Activated CD8-positive, alpha-beta T cell treated with anti-CD3 and anti-CD28 coated beads, Interleukin-2, amount 10 ng/mL, durations not matched to agents 7 days and 5 days (primary cell): ENCODE measurements at regions of chr3 and their contacts with region 1.

Region 1: GRCh38 chr3:48472915-48473616 is 26.5 kb downstream of the ATRIP start:
- DNase-seq: peak; percentile 98
- ATAC-seq: peak; percentile 88
- H3K4me3 Mint-ChIP-seq: peak overlapping the region; percentile 93
- H3K27ac Mint-ChIP-seq: peak overlapping the region; percentile 100
- H3K4me1 Mint-ChIP-seq: peaks cover 73% of the 10 kb centered on the region
- H3K27me3 Mint-ChIP-seq: no peaks in the 10 kb centered on the region

Region 2: DNA sequence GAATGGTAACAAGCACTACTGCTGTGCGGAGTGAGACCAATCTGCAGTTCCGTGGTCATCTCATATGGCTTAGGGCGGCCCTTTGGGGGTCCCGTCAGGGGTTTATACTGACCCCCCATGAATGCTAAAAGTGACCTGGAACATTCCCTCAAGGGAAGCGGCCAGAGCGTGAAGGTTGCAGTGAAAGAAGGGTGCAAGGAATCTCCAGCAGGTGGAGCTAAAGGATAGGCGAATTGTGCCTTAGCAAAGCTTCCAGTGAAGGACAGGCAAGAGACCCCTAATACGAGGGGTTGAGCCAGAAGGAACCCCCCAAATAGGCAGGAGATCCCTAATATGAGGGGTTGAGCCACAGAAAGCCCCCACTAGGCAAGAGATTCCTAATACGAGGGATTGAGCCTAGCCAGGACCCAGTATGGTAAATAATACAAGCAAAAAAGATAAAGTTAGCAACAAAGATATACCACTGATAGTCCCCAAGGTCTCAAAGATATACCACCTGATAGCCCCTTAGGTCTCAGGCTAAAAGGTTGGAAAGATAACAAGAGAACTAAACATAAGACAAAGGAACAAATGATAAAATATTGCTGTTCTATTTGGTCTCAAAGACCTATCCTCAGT is 199.4 kb before region 1 on chr3:
- CTCF ChIA-PET with region 1: no interaction called
- POLR2A ChIA-PET with region 1: no interaction called
- DNase-seq: peak; percentile 72
- ATAC-seq: peak; percentile 44
- H3K4me3 Mint-ChIP-seq: no peak overlapping the region
- H3K27ac Mint-ChIP-seq: no peak overlapping the region
- H3K4me1 Mint-ChIP-seq: peaks cover 20% of the 10 kb centered on the region
- H3K27me3 Mint-ChIP-seq: no peaks in the 10 kb centered on the region

Region 3: GRCh38 chr3:48446425-48447193 is 26.5 kb before region 1 on chr3 and contains the start of gene ATRIP:
- CTCF ChIA-PET with region 1: interaction called, 11 read pairs
- POLR2A ChIA-PET with region 1: interaction called, 24 read pairs
- DNase-seq: peak; percentile 89
- ATAC-seq: peak; percentile 97
- H3K4me3 Mint-ChIP-seq: peak within 1 kb of the TSS; percentile 84
- H3K27ac Mint-ChIP-seq: peak within 1 kb of the TSS; percentile 87
- H3K4me1 Mint-ChIP-seq: peaks cover 46% of the 10 kb centered on the region
- H3K27me3 Mint-ChIP-seq: no peaks in the 10 kb centered on the region
- total RNA-seq, gene ATRIP: 18.8 to 20.3 TPM

Region 4: GRCh38 chr3:48456456-48456855 is 16.6 kb before region 1 on chr3:
- CTCF ChIA-PET with region 1: interaction called, 5 read pairs
- POLR2A ChIA-PET with region 1: interaction called, 13 read pairs
- DNase-seq: no peak
- ATAC-seq: no peak
- H3K4me3 Mint-ChIP-seq: no peak overlapping the region
- H3K27ac Mint-ChIP-seq: no peak overlapping the region
- H3K4me1 Mint-ChIP-seq: peaks cover 17% of the 10 kb centered on the region
- H3K27me3 Mint-ChIP-seq: no peaks in the 10 kb centered on the region

Region 5: GRCh38 chr3:48507351-48508061 is 34.4 kb after region 1 on chr3:
- CTCF ChIA-PET with region 1: interaction called, 41 read pairs
- POLR2A ChIA-PET with region 1: interaction called, 35 read pairs
- DNase-seq: peak; percentile 86
- ATAC-seq: peak; percentile 87
- H3K4me3 Mint-ChIP-seq: no peak overlapping the region
- H3K27ac Mint-ChIP-seq: peak overlapping the region; percentile 81
- H3K4me1 Mint-ChIP-seq: peaks cover 53% of the 10 kb centered on the region
- H3K27me3 Mint-ChIP-seq: peaks cover 6% of the 10 kb centered on the region

Region 6: GRCh38 chr3:48514436-48515227 is 41.6 kb after region 1 on chr3:
- CTCF ChIA-PET with region 1: interaction called, 41 read pairs
- POLR2A ChIA-PET with region 1: interaction called, 14 read pairs
- DNase-seq: peak; percentile 77
- ATAC-seq: peak; percentile 73
- H3K4me3 Mint-ChIP-seq: peak overlapping the region; percentile 43
- H3K27ac Mint-ChIP-seq: peak overlapping the region; percentile 75
- H3K4me1 Mint-ChIP-seq: peaks cover 65% of the 10 kb centered on the region
- H3K27me3 Mint-ChIP-seq: peaks cover 6% of the 10 kb centered on the region

Region 7: GRCh38 chr3:48556793-48557626 is 83.9 kb after region 1 on chr3 and contains the start of gene PFKFB4:
- CTCF ChIA-PET with region 1: interaction called, 10 read pairs
- POLR2A ChIA-PET with region 1: interaction called, 7 read pairs
- DNase-seq: peak; percentile 100
- ATAC-seq: peak; percentile 92
- H3K4me3 Mint-ChIP-seq: peak within 1 kb of the TSS; percentile 85
- H3K27ac Mint-ChIP-seq: peak within 1 kb of the TSS; percentile 83
- H3K4me1 Mint-ChIP-seq: peaks cover 66% of the 10 kb centered on the region
- H3K27me3 Mint-ChIP-seq: peaks cover 3% of the 10 kb centered on the region
- total RNA-seq, gene PFKFB4: 42.8 to 49.1 TPM

Region 8: DNA sequence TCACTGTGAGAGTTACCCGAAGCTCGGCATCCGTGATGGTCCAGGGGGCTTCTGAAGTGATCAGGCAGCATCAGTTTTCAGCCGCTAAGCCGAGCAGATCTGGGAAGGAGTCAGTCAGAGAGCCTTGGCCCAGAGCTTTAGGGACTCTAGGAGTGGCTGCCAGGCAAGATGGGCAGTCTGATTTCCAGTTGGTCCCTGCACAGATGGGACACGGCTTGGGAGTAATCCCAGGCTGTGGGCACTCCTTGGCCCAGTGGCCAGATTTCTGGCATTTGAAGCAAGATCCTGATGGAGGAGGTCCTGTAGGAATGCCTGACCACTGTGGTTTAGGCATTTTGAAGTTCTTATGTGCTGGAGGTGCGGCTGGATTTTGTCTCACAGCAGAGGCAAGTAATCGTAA is 254.4 kb after region 1 on chr3:
- CTCF ChIA-PET with region 1: no interaction called
- POLR2A ChIA-PET with region 1: no interaction called
- DNase-seq: no peak
- ATAC-seq: no peak
- H3K4me3 Mint-ChIP-seq: no peak overlapping the region
- H3K27ac Mint-ChIP-seq: no peak overlapping the region
- H3K4me1 Mint-ChIP-seq: no peaks in the 10 kb centered on the region
- H3K27me3 Mint-ChIP-seq: peaks cover 8% of the 10 kb centered on the region